ENCODE measurements at regions of chr7 and their contacts with region 1.

Region 1: DNA sequence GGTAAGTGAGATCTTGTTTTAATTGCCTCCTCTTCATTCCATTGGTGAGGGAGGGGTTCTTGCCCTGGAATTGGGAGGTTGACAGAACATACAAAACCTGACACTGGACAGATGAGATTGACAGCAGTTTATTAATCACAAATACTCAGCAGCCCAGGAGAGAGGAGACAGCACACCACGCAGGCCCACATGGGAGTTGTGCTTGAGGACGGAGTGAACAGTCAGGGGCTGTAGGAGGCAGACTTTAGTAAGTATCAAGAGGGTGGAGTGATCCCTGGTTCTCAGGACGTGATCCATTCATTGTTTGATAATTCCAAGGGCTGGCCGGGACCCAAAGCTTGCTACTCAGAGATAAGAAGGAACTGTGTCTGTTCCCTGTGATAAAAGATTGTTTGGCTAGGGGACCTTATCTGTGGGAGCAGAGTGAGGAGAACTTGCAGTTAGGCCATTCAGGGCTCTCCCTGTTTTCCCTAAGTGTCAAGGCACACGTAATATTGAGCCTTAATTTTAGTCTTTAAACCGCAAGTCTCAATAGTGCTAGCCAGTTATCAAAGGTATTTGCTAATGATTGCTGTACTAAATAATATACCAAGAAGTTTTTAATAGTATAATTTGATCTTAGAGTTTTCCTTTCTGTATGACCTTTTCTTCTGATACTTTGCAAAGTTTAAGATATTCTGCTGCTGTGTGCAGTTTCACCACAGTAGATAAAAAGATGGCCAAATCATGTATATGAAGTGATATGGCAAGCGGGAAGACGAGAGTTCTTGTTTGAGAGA is 14.5 kb downstream of the CAPZA2 start:
- DNase-seq: no peak
- ATAC-seq: no peak
- H3K4me3 ChIP-seq: no peak overlapping the region
- H3K4me3 Mint-ChIP-seq: no peak overlapping the region
- H3K27ac ChIP-seq: no peak overlapping the region
- H3K27ac Mint-ChIP-seq: no peak overlapping the region
- H3K4me1 ChIP-seq: peaks cover 9 to 12% of the 10 kb centered on the region in 2 donors
- H3K4me1 Mint-ChIP-seq: peaks cover 30% of the 10 kb centered on the region
- H3K27me3 ChIP-seq: no peaks in the 10 kb centered on the region
- H3K27me3 Mint-ChIP-seq: no peaks in the 10 kb centered on the region
- CTCF ChIP-seq: no peak

Region 2: DNA sequence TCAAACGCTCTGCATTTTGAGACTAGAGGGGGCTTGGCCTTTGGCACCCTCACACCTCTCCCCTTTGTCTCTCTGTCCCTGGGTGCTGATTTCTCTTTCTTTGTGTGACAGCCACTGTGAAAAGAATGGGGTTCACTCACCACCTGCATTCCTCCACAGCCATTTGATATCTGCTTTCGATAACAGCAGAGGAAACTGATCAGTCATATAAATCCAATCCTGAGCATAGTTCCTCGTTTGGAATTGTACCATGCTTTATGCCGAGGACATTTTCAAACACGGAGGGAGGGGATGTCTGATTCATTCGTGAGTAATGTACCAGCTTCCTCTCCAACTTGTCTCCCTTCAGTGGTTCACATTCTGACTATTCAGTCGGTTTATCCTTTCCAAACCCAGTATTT is 189.1 kb before region 1 on chr7:
- CTCF ChIA-PET with region 1: no interaction called
- POLR2A ChIA-PET with region 1: no interaction called
- intact Hi-C with region 1: no loop called
- DNase-seq: no peak
- ATAC-seq: no peak
- H3K4me3 ChIP-seq: no peak overlapping the region
- H3K4me3 Mint-ChIP-seq: no peak overlapping the region
- H3K27ac ChIP-seq: no peak overlapping the region
- H3K27ac Mint-ChIP-seq: no peak overlapping the region
- H3K4me1 ChIP-seq: peaks cover 17 to 34% of the 10 kb centered on the region in 2 donors
- H3K4me1 Mint-ChIP-seq: peaks cover 25% of the 10 kb centered on the region
- H3K27me3 ChIP-seq: peaks cover 0 to 64% (median 57%) of the 10 kb centered on the region in 4 experiments
- H3K27me3 Mint-ChIP-seq: peaks cover 52% of the 10 kb centered on the region
- CTCF ChIP-seq: no peak

Region 3: DNA sequence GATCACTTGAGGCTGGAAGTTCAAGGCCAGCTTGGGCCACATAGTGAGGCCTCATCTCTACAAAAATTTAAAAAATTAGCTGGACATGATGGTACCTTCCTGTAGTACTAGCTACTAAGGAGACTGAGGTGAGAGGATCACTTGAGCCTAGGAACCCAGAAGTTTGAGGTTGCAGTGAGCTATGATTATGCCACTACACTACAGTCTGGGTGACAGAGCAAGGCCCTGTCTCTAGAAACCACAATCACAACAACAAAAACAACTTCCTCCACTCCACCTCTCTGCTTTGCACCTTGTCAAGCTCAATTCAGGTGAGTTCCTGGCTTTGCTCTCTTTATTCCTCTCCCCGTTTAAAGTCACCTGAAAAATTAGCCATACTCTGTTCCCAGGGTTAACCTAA is 22.7 kb before region 1 on chr7:
- CTCF ChIA-PET with region 1: interaction called, 4 read pairs
- POLR2A ChIA-PET with region 1: interaction called, 10 read pairs
- intact Hi-C with region 1: no loop called
- DNase-seq: no peak
- ATAC-seq: no peak
- H3K4me3 ChIP-seq: no peak overlapping the region
- H3K4me3 Mint-ChIP-seq: no peak overlapping the region
- H3K27ac ChIP-seq: no peak overlapping the region
- H3K27ac Mint-ChIP-seq: no peak overlapping the region
- H3K4me1 ChIP-seq: no peaks in the 10 kb centered on the region
- H3K4me1 Mint-ChIP-seq: no peaks in the 10 kb centered on the region
- H3K27me3 ChIP-seq: peaks cover 0 to 10% (median 2%) of the 10 kb centered on the region in 4 experiments
- H3K27me3 Mint-ChIP-seq: peaks cover 38% of the 10 kb centered on the region
- CTCF ChIP-seq: no peak